GM13976 (cell line): ENCODE measurements at regions of chr9 and their contacts with region 1.

Region 1: GRCh38 chr9:114653556-114654159 is 3.9 kb downstream of the TEX53 start:
- DNase-seq: peak; percentile 82
- CTCF ChIP-seq: peak; percentile 88

Region 2: GRCh38 chr9:113973851-113974413 is 679.7 kb before region 1 on chr9:
- in situ Hi-C with region 1: no loop called
- DNase-seq: no peak
- CTCF ChIP-seq: no peak

Region 3: DNA sequence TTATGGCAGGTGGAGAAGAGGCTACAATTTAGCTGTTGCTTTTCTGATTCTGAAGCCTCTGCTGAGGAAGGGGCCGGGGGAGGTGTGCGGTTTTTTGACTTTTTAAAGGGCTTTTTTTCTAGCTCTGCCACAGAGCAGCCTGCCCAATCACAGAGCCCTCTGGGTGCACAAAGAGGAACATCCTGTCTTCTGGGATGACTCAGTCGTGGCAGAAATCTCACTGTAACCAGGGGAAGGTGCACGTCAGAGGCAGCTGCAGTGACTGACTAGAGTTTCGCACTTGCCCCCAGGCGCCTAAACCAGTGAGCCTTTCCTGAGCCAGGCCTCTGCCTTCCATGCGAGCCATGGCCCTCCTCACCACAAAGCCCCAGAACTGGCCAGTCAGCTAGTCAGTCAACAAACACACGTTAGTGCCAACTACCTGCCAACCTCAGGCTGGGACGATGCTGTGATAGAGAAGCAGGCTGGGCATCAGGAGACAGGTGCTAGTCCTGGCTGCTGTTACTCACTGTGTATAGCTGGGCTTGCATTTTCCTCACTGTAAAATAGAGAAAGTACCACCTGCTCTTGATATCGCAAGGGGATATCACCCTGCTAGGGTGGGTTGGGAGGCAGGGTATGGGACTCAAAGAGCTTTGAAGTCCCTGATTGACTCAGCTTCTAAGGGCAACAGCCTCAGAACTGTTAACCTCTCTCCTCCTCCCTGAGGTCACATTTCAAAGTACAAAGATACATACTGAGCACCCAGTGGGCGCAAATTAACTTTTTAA is 268.1 kb before region 1 on chr9:
- in situ Hi-C with region 1: no loop called
- DNase-seq: peak; percentile 86
- CTCF ChIP-seq: no peak

Region 4: DNA sequence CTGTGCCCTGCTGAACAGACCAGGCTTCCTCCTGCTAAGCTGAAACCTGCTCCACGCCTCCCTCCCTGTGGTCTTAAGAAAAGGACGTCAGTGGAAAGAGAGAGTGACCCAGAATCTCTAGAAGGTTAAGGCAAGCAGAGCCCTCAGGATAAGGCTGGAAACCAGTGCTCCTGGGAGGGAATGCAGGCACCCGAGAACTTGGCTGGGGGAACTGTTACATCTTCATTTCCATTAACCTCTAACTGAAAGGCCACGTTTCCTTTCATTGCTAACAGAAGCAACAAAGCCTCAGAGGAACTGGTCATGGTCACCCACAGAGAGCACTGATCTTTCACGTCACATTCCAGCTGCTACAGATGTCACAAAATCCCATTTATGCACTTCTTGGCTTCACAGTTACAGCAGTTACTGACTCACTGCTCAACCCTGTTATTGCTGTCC is 239.8 kb before region 1 on chr9:
- in situ Hi-C with region 1: loop called (anchors 10 kb)
- DNase-seq: no peak
- CTCF ChIP-seq: no peak

Region 5: GRCh38 chr9:114465903-114466530 is 187.6 kb before region 1 on chr9:
- in situ Hi-C with region 1: no loop called
- DNase-seq: no peak
- CTCF ChIP-seq: no peak

Region 6: DNA sequence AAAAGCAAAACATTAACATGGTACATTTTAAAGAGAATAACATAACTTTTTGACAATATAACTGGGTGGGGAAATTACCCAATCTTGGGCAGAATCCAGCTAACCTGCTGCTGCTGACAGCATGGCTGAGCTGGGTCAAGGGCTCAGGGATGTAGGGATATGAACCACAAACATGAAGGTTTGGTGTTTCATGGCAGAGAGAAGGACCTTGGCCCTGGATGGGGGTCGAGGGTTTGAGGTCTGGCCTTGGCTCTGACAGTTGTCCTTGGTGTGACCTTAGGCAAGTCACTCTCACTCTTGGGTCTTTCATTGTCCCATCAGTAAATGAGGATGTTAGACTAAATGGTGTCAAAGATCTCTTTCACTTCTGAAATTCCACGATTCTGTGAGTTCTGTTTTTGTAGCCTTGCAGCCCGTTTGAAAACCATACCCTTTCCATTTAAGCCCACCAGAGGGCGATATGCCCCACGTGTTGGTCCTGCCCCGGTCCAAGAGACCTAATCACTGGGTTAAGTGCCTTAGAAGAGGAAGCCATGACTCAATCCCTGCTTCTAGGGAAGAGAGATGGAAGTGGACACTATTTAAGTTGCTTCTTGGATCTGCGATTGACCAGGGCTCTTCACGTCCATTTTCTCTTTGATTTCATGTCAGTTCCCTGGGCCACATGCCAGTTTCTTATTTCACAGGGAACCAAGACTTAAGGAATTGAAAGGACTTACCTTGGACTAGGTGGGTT is 85.1 kb after region 1 on chr9:
- in situ Hi-C with region 1: no loop called
- DNase-seq: peak; percentile 63
- CTCF ChIP-seq: peak; percentile 63